Endothelial cell of umbilical vein (primary cell): ENCODE measurements at regions of chr17 and their contacts with region 1.

Region 1: GRCh38 chr17:27818401-27819105 is 18.2 kb upstream of the NOS2 start:
- DNase-seq: peak; percentile 40
- H3K4me3 ChIP-seq: no peak overlapping the region
- H3K27ac ChIP-seq: peak overlapping the region; percentile 49
- H3K4me1 ChIP-seq: peaks cover 19% of the 10 kb centered on the region
- H3K27me3 ChIP-seq: no peaks in the 10 kb centered on the region
- CTCF ChIP-seq: no peak
- POLR2A ChIP-seq: no peak

Region 2: DNA sequence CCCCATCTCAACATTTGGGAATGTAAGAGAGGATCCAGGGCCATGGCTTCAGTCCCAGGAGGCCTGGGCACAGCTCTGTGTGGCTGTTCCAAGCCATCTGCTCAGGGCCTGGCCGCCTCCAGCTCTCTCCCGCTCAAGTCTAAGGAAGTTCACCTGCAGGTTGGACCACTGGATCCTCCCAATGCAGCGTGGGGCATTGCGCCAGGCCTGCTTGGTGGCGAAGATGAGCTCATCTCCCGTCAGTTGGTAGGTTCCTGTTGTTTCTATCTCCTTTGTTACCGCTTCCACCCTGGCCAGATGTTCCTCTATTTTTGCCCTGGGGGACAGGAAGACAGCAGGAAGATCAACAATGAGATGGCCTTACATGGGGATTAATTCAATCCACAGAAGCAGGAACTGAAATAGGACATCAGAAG is 35.8 kb before region 1 on chr17:
- CTCF ChIA-PET with region 1: no interaction called
- POLR2A ChIA-PET with region 1: interaction called, 14 read pairs
- dilution Hi-C with region 1: no loop called
- intact Hi-C with region 1: no loop called
- DNase-seq: no peak
- H3K4me3 ChIP-seq: no peak overlapping the region
- H3K27ac ChIP-seq: no peak overlapping the region
- H3K4me1 ChIP-seq: no peaks in the 10 kb centered on the region
- H3K27me3 ChIP-seq: no peaks in the 10 kb centered on the region
- CTCF ChIP-seq: no peak
- POLR2A ChIP-seq: no peak